Heart right ventricle (tissue), 16 donors: ENCODE measurements at regions of chr14 and their contacts with region 1.

Region 1: GRCh38 chr14:104694991-104695659 is 5.7 kb downstream of the INF2 start:
- DNase-seq: peak in 1 of 2 donors; percentile 70
- ATAC-seq: peak; percentile 5 to 49 (median 34)
- H3K4me3 ChIP-seq: peak overlapping the region in 5 of 10 donors; percentile 3 to 27 (median 15)
- H3K27ac ChIP-seq: peak overlapping the region; percentile 65 to 90 (median 76)
- H3K4me1 ChIP-seq: peaks cover 64 to 100% (median 99%) of the 10 kb centered on the region in 9 donors
- H3K27me3 ChIP-seq: no peaks in the 10 kb centered on the region
- CTCF ChIP-seq: no peak

Region 2: GRCh38 chr14:104436047-104436591 is 259.0 kb before region 1 on chr14:
- intact Hi-C with region 1: no loop called
- DNase-seq: peak; percentile 82 to 86
- ATAC-seq: peak; percentile 80 to 93 (median 88)
- H3K4me3 ChIP-seq: peak overlapping the region in 9 of 10 donors; percentile 16 to 46 (median 39)
- H3K27ac ChIP-seq: peak overlapping the region in 9 of 10 donors; percentile 41 to 87 (median 75)
- H3K4me1 ChIP-seq: peaks cover 7 to 26% (median 17%) of the 10 kb centered on the region in 9 donors
- H3K27me3 ChIP-seq: no peaks in the 10 kb centered on the region
- CTCF ChIP-seq: peak in 3 of 9 donors; percentile 9 to 12 (median 10)

Region 3: GRCh38 chr14:104657101-104657524 is 38.0 kb before region 1 on chr14:
- intact Hi-C with region 1: loop called in 2 of 10 experiments (anchors 5 kb)
- DNase-seq: no peak
- ATAC-seq: peak in 1 of 8 donors; percentile 7
- H3K4me3 ChIP-seq: no peak overlapping the region
- H3K27ac ChIP-seq: no peak overlapping the region
- H3K4me1 ChIP-seq: peaks cover 2 to 37% (median 18%) of the 10 kb centered on the region in 9 donors
- H3K27me3 ChIP-seq: peaks cover 0 to 23% (median 0%) of the 10 kb centered on the region in 7 donors
- CTCF ChIP-seq: no peak